Heart right ventricle (tissue), 16 donors: ENCODE measurements at regions of chr18 and their contacts with region 1.

Region 1: DNA sequence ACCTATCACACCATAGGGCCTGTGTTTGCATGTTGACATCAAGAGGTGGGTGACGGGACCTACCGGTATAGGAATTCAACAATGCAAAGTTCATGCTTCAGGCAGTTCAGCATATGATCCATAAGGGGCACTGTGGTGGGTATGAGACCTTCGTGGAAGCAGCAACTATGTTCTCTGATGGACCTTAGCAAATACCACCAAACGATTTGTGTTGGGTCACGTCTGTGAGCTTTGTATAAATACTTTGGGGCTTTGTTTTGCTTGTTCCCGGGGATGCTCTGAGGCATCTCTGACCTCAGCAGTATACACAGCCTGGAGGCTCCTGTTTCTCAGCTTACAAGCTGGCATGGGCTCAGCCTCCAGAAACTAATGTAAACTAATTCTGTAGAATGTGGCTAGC is 111.7 kb downstream of the DTNA start:
- DNase-seq: no peak
- ATAC-seq: peak in 1 of 8 donors; percentile 37
- H3K4me3 ChIP-seq: no peak overlapping the region
- H3K27ac ChIP-seq: no peak overlapping the region
- H3K4me1 ChIP-seq: peaks cover 0 to 4% (median 0%) of the 10 kb centered on the region in 9 donors
- H3K27me3 ChIP-seq: no peaks in the 10 kb centered on the region
- CTCF ChIP-seq: no peak

Region 2: DNA sequence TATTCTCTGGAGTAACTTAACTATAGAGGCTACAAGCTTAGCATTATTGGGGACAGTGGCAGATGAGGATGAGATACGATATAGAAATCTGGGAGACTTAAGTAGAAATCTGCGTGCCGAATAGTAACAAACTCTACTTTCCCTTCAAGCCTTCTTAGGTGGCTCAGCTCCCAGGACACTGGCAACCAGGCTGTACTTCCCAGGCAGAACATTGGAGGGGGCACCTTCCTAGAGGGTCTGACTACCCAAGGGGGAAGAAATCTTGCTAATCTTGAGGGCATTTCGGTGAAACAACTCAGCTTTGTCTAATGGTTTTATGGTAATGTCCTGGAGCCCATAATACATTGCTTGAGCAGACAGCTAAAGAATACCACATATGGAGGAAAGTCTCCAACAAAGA is 237.9 kb before region 1 on chr18:
- intact Hi-C with region 1: no loop called
- DNase-seq: no peak
- ATAC-seq: no peak
- H3K4me3 ChIP-seq: no peak overlapping the region
- H3K27ac ChIP-seq: no peak overlapping the region
- H3K4me1 ChIP-seq: no peaks in the 10 kb centered on the region
- H3K27me3 ChIP-seq: no peaks in the 10 kb centered on the region
- CTCF ChIP-seq: no peak

Region 3: GRCh38 chr18:34691614-34692013 is 130.1 kb before region 1 on chr18:
- intact Hi-C with region 1: no loop called
- DNase-seq: no peak
- ATAC-seq: no peak
- H3K4me3 ChIP-seq: no peak overlapping the region
- H3K27ac ChIP-seq: no peak overlapping the region
- H3K4me1 ChIP-seq: peaks cover 0 to 32% (median 15%) of the 10 kb centered on the region in 9 donors
- H3K27me3 ChIP-seq: no peaks in the 10 kb centered on the region
- CTCF ChIP-seq: no peak

Region 4: DNA sequence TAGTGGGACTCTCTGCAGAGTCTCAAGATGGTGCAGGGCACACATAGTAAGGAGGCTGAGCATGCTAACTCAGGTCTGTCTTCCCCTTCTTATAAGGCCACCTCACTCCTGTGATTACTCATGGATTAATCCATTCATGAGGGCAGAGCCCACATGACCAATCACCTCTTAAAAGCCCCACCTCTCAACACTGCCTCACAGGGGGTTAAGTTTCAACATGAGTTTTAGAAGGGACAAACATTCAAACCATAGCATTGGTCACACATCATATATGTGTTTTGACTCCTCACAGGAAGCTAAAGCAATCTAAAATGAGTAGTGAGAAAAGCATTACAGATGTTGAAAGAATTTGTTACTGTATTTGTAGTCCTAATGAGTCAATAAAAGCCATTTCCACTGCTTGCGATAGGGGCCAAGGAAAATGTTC is 54.1 kb before region 1 on chr18:
- intact Hi-C with region 1: loop called in 1 of 10 experiments (anchors 10 kb)
- DNase-seq: no peak
- ATAC-seq: no peak
- H3K4me3 ChIP-seq: no peak overlapping the region
- H3K27ac ChIP-seq: no peak overlapping the region
- H3K4me1 ChIP-seq: peaks cover 0 to 11% (median 4%) of the 10 kb centered on the region in 9 donors
- H3K27me3 ChIP-seq: no peaks in the 10 kb centered on the region
- CTCF ChIP-seq: no peak